ENCODE measurements at regions of chr5 and their contacts with region 1.

Region 1: DNA sequence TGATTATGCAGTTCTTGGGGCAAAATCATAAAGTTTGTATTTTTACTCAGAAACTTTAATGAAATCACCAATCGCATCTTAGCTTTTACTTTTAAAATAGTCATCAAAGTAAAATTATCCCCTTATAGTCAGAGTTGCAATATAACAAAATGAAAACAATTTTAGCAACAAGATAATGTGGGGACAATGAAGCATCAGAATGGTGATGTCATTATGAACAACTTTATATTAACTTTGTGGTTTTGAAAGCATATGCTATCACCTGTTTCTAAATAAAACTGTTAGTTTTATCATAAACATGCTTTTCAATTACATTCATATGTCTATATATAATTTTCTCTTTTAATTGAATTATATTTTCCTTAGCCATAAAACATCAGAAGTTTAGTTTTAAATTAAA is 856.8 kb downstream of the CDH9 start:
- DNase-seq: no peak
- H3K4me3 ChIP-seq: no peak overlapping the region
- H3K27ac ChIP-seq: no peak overlapping the region
- H3K4me1 ChIP-seq: no peaks in the 10 kb centered on the region
- H3K27me3 ChIP-seq: no peaks in the 10 kb centered on the region
- CTCF ChIP-seq: no peak

Region 2: GRCh38 chr5:26192496-26192895 is 10.9 kb after region 1 on chr5:
- CTCF ChIA-PET with region 1: no interaction called
- POLR2A ChIA-PET with region 1: no interaction called
- intact Hi-C with region 1: no loop called
- DNase-seq: peak in 1 of 2 experiments; percentile 78
- H3K4me3 ChIP-seq: no peak overlapping the region
- H3K27ac ChIP-seq: no peak overlapping the region
- H3K4me1 ChIP-seq: 0 out of 2 replicates have a peak, but pooled peaks cover 7% of the 10 kb centered on the region
- H3K27me3 ChIP-seq: no peaks in the 10 kb centered on the region
- CTCF ChIP-seq: no peak

Region 3: DNA sequence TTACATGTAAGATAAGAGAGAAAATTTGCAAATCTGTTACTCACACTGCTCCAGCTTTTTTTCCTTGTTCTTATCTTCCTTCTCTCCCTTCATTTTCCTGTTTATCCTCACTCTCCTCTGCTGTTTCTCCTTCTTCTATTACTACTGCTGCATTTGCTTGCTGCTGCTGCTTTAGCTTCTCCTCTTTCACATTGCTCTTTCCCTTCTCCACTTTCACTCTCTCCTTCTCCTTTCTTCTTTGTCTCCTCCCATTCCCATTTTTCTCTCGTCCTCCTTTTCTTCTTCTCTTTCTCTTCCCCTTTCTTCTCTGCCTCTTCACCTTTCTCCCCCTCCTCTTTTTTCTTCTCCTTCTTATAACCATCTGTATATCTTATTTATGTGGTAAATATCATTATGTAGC is 568.2 kb after region 1 on chr5:
- CTCF ChIA-PET with region 1: no interaction called
- POLR2A ChIA-PET with region 1: no interaction called
- intact Hi-C with region 1: no loop called
- DNase-seq: no peak
- H3K4me3 ChIP-seq: no peak overlapping the region
- H3K27ac ChIP-seq: no peak overlapping the region
- H3K4me1 ChIP-seq: no peaks in the 10 kb centered on the region
- H3K27me3 ChIP-seq: no peaks in the 10 kb centered on the region
- CTCF ChIP-seq: no peak

Region 4: GRCh38 chr5:27778121-27778520 is 1596.5 kb after region 1 on chr5:
- CTCF ChIA-PET with region 1: interaction called, 16 read pairs
- POLR2A ChIA-PET with region 1: no interaction called
- intact Hi-C with region 1: no loop called
- DNase-seq: no peak
- H3K4me3 ChIP-seq: no peak overlapping the region
- H3K27ac ChIP-seq: no peak overlapping the region
- H3K4me1 ChIP-seq: no peaks in the 10 kb centered on the region
- H3K27me3 ChIP-seq: no peaks in the 10 kb centered on the region
- CTCF ChIP-seq: no peak

Region 5: GRCh38 chr5:28014779-28015178 is 1833.2 kb after region 1 on chr5:
- CTCF ChIA-PET with region 1: no interaction called
- POLR2A ChIA-PET with region 1: no interaction called
- intact Hi-C with region 1: loop called (anchors 10 kb)
- DNase-seq: peak; percentile 25 to 44
- H3K4me3 ChIP-seq: no peak overlapping the region
- H3K27ac ChIP-seq: no peak overlapping the region
- H3K4me1 ChIP-seq: no peaks in the 10 kb centered on the region
- H3K27me3 ChIP-seq: no peaks in the 10 kb centered on the region
- CTCF ChIP-seq: peak; percentile 96